HEK293 (cell line): ENCODE measurements at regions of chr22 and their contacts with region 1.

Region 1: DNA sequence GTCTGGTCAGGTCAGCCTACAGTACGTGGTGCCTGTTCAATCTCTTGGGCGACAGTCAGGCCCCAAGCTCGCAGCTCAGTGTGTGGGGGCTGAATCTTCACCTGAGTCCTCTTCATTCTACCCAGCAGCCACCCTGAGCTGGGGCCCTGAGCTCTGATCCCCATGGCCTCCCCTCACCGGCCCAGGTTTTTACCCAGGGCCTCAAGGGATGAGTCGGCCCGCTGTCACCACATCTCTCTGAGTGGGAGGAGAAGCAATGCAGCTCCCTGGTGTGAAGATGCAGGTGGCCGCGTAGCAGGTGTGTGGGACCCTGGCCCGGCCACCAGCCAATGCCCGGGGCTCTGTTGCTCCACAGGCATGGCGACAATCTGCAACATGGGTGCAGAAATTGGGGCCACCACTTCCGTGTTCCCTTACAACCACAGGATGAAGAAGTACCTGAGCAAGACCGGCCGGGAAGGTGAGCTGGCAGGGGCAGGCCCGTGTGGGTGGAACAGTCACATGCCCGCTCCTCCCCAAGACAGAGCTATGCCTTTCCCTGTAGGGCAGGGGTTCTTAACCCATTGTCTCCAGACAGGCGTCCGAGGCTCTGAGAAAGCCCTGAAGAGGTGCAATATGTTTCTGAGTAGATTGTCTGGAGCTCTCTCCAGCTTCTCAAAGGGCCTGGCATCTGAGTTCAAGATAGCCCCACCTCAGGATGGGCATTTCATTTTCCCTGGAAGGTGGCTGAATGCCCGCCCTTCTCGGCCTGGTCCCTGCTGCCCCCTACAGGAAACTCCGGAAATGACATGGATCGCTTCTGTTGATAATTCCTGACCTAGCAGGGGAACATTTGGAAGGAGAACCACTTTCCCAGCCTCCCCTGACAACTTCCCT is 26.9 kb downstream of the POLR3H start:
- H3K4me3 ChIP-seq: no peak overlapping the region
- H3K27ac ChIP-seq: no peak overlapping the region
- H3K4me1 ChIP-seq: peaks cover 10% of the 10 kb centered on the region
- CTCF ChIP-seq: peak; percentile 80

Region 2: GRCh38 chr22:41397143-41397811 is 120.1 kb before region 1 on chr22:
- CTCF ChIA-PET with region 1: interaction called, 301 read pairs
- POLR2A ChIA-PET with region 1: no interaction called
- H3K4me3 ChIP-seq: no peak overlapping the region
- H3K27ac ChIP-seq: no peak overlapping the region
- H3K4me1 ChIP-seq: no peaks in the 10 kb centered on the region
- CTCF ChIP-seq: no peak

Region 3: GRCh38 chr22:41411021-41411851 is 106.2 kb before region 1 on chr22:
- CTCF ChIA-PET with region 1: interaction called, 301 read pairs
- POLR2A ChIA-PET with region 1: no interaction called
- H3K4me3 ChIP-seq: no peak overlapping the region
- H3K27ac ChIP-seq: peak overlapping the region; percentile 21; the same call in 1 of the 2 replicates
- H3K4me1 ChIP-seq: peaks cover 6% of the 10 kb centered on the region; the same call in 1 of the 2 replicates
- CTCF ChIP-seq: no peak

Region 4: GRCh38 chr22:41442240-41442792 is 75.1 kb before region 1 on chr22:
- CTCF ChIA-PET with region 1: interaction called, 17 read pairs
- POLR2A ChIA-PET with region 1: interaction called, 24 read pairs
- H3K4me3 ChIP-seq: no peak overlapping the region
- H3K27ac ChIP-seq: peak overlapping the region; percentile 34; the same call in 1 of the 2 replicates
- H3K4me1 ChIP-seq: peaks cover 3% of the 10 kb centered on the region
- CTCF ChIP-seq: no peak

Region 5: DNA sequence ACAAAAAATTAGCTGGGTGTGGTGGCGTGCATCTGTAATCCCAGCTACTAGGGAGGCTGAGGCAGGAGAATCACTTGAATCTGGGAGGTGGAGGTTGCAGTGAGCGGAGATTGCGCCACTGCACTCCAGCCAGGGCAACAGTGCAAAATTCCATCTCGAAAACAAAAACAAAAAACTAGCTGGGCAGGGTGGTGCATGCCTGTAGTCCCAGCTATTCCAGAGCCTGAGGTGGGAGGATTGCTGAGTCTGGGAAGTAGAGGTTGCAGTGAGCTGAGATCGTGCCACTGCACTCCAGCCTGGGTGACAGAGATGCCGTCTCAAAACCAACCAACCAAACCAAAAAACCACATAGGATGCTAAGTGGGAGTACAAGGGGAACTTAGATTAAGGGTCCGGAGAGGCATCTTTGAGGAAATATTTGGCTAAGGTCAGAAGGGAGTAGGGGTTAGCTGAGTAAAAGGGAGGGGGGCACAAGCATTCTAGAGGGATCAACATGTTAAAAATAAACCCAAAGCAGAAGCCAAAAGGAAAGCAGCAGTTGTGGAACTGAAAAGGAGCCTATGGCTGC is 59.2 kb before region 1 on chr22:
- CTCF ChIA-PET with region 1: interaction called, 10 read pairs
- POLR2A ChIA-PET with region 1: no interaction called
- H3K4me3 ChIP-seq: no peak overlapping the region
- H3K27ac ChIP-seq: no peak overlapping the region
- H3K4me1 ChIP-seq: no peaks in the 10 kb centered on the region
- CTCF ChIP-seq: no peak

Region 6: DNA sequence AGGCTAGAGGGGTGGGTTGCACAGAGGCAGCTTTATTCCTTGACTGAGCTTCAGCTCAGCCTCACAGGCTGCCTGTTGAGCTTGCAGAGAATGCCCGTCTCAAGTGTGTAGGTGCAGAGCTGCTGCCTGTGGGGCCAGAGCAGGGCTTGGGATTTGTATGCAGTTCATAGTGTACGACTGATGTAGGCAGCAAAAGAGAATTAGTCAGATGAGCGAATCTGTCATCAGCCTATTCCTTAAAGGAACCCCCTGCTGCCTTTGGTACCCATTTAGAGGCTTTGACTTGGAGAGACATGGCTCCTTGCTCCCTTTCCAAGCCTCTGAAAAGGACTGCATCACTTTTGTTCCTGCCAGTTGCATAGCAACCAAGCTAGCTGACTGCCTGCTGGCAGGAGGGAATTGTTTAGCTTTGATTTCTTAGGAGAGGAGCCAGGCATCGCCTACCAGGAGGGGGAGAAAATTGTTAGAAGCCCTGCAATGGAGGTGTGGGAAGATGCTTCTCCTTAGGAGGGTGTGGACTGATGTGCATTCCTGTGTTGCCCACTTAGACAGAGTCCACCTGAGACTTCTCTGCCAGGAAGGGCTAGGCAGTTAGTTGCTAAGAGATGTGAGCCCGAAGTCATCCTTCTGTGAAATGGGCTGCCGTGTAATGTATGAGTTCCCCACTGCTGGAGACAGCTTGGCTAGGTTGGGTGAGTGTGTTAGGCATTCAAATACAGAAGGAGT is 37.6 kb before region 1 on chr22:
- CTCF ChIA-PET with region 1: interaction called, 28 read pairs
- POLR2A ChIA-PET with region 1: no interaction called
- H3K4me3 ChIP-seq: no peak overlapping the region
- H3K27ac ChIP-seq: no peak overlapping the region
- H3K4me1 ChIP-seq: no peaks in the 10 kb centered on the region
- CTCF ChIP-seq: no peak

Region 7: DNA sequence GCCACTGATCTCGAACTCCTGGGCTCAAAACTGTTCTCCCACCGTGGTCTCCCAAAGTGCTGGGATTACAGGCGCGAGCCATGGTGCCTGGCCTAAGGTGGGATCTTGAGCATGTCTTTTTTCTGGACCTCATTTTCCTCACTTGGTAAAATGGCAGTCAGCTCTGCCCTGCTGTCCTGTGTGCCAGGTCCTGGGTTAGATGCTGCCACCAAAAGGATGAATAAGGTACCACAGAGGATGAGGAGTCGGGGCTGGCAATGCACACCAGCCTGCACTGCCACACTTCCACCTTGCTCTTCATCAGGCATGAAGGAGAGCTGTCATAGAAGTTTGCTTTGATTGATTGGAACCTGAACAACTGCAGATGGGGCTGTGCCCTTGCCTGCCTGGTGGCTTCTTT is 16.2 kb before region 1 on chr22:
- CTCF ChIA-PET with region 1: interaction called, 16 read pairs
- POLR2A ChIA-PET with region 1: no interaction called
- H3K4me3 ChIP-seq: no peak overlapping the region
- H3K27ac ChIP-seq: no peak overlapping the region
- H3K4me1 ChIP-seq: no peaks in the 10 kb centered on the region
- CTCF ChIP-seq: no peak